ENCODE measurements at regions of chr4 and their contacts with region 1.

Region 1: DNA sequence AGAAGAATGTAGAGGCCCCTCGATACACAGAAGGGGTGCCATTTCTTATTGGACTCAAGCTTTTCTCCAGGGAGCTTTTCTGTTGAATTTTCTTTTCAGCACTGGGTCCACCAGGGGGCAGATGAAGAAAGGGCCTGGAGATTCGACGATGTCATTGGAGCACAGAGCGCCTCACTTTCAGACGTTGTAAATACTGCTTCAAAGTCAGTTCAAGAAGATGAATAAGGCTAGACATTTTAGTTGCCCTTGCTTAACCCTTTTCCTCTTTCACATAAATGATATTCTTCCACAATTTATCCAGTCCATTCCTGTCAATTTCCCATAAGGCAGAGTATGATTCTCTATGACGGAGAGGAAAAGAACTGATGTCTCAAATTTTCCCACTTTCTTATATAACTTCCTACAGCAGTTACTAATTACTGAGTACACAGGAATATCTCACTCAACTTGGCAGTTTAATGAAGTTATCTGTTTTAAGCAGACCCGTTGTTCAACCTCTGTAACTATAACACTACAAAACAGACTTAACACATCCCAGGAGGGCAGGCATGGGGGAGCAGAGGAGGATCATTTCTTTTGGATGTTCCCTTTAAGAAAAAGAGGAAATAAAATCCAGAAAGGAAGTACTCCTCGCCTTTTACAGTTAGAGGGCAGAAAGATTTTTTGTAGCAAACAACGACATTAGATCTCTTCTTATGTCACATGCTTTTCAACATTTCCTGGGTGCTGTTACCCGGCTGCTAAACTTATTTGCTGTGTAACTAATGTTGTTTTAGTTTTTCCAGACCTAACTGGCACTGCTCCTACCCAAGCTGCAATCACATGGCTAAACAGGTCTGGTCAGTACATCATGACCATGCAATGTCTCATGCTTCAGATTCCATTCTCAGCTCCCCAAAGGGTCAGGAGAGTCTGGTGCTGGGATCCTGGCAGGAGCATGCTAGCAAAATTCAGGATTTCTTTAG is 12.2 kb upstream of the CENPU start:
- DNase-seq: peak; percentile 75 to 85
- H3K4me3 ChIP-seq: peak overlapping the region in 2 of 3 donors; percentile 0 to 30
- H3K27ac ChIP-seq: peak overlapping the region; percentile 90 to 95
- H3K4me1 ChIP-seq: peaks cover 12 to 25% of the 10 kb centered on the region in 2 donors
- H3K27me3 ChIP-seq: no peaks in the 10 kb centered on the region
- CTCF ChIP-seq: peak; percentile 81 to 89 (median 86)
- POLR2A ChIP-seq: no peak

Region 2: DNA sequence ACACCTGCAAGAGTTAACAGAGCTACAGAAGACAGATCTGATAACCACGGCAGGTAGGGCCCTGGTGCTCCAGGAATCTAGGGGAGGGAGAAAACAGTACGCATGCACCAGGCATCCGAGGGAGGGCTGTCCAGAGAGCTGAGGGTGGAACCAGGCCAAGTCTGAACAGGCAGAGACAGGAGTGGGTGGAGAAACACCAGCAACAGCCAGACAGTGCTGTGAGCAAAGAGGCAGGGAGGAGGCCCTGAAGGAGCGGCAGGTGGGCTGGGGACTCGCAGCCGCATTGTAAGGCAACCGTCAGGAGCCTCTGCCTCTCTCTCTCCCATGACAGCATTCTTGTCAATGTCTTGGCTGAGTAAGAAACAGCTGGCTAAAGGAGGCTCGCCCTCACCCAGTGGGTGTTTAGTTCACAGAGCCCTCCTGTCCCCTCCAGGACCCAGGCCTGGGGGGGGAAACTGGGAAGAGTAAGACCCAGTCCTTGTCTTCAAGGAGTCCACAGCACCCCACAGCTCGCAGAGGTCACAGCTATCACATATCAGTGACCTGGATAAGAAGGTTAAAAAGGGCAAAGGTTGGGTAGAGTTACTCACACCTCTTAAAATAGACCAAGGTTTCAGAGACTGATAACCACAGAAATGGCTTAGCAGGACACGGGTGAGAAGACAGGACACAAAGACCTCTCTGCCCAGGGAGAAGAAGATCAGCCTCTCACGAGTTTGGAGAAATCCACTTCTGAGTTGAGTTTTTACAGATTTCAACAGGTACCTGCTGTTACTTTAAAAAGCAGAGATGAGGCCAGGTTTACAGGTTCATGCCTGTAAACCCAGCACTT is 69.1 kb after region 1 on chr4:
- intact Hi-C with region 1: loop called (anchors 10 kb)
- DNase-seq: peak; percentile 67 to 83
- H3K4me3 ChIP-seq: peak overlapping the region in 2 of 3 donors; percentile 24 to 47
- H3K27ac ChIP-seq: peak overlapping the region; percentile 81 to 90
- H3K4me1 ChIP-seq: peaks cover 7 to 17% of the 10 kb centered on the region in 2 donors
- H3K27me3 ChIP-seq: no peaks in the 10 kb centered on the region
- CTCF ChIP-seq: no peak
- POLR2A ChIP-seq: no peak

Region 3: GRCh38 chr4:184889666-184890335 is 143.7 kb after region 1 on chr4:
- intact Hi-C with region 1: no loop called
- DNase-seq: no peak
- H3K4me3 ChIP-seq: no peak overlapping the region
- H3K27ac ChIP-seq: no peak overlapping the region
- H3K4me1 ChIP-seq: no peaks in the 10 kb centered on the region
- H3K27me3 ChIP-seq: no peaks in the 10 kb centered on the region
- CTCF ChIP-seq: no peak
- POLR2A ChIP-seq: no peak

Region 4: DNA sequence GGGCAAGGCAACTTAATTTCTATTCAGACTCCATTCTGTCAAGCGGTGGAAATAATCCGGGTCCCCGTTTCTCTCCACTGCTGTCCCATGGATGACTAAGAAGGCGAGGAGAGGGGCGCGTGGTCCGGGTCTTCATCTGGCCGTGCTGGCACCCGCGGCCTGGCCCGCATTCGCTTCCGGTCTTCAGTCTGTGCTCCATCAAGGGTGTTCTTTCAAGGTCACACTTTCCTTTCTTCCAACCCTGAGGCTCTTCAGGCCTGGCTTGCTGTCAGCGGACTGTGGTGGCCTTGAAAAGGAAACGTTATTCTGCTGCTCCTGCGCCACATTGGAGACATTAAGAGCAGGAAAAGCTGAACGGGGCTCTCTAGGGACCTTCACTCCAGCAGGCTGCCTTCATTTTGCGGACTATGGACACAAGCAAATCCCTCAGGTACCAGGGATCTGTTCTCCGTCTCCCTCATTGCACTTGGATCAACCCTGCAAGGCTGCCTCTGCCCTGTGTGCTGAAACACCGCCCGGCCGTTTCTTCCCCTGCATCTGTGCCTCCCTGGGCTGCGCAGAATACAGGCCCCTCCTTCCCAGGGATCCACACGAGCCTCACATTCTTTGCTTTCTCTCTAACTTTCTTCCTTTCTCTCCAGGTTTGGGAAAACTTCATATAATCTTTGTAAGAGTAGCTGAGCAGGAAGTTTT is 391.3 kb after region 1 on chr4:
- intact Hi-C with region 1: loop called (anchors 5 kb)
- DNase-seq: no peak
- H3K4me3 ChIP-seq: no peak overlapping the region
- H3K27ac ChIP-seq: no peak overlapping the region
- H3K4me1 ChIP-seq: peaks cover 0 to 4% of the 10 kb centered on the region in 2 donors
- H3K27me3 ChIP-seq: no peaks in the 10 kb centered on the region
- CTCF ChIP-seq: no peak
- POLR2A ChIP-seq: no peak

Measured in breast epithelium (tissue), 4 donors.